ENCODE measurements at regions of chr22 and their contacts with region 1.

Region 1: DNA sequence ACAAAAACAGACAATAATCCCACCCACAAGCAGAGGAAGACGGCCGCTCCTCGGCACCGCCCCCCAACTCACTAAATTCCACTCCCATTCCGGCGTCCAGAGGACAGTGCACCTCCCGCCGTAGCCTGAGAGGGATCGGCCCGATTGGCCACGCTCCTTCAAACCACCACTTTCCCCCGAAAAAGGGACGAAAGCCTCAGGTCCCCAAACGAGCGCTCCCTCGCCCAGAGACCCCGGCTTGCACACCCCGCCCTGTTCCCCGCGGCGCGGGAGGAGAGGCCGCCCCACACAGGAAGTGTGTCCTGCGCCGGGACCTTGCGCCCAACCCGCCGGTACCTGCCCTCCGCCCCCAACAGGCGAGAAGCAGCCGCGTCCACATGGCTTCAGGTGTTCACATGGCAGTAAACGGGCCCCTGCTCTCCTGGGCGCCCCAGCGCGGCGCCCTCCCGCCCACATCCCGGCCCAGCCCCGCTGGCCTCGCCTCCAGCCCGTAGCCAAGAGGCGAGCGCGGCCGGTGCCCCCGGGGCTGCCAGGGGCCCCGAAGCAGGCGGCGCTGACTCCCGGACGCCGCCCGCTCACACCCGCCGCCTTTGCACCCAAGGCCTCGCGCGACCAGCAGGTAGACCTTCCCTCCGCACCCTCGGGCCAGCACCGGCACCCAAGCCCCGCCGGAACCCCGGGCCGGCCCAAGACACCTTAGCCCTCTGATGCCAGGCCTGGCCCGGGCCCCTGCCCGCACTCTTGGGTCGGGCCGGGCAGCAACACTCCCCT is 861 bp downstream of the TCF20 start:
- DNase-seq: peak; percentile 93
- H3K4me3 Mint-ChIP-seq: peak overlapping the region; percentile 97
- H3K27ac Mint-ChIP-seq: peak overlapping the region; percentile 81
- H3K4me1 Mint-ChIP-seq: peaks cover 30% of the 10 kb centered on the region
- H3K27me3 Mint-ChIP-seq: no peaks in the 10 kb centered on the region

Region 2: DNA sequence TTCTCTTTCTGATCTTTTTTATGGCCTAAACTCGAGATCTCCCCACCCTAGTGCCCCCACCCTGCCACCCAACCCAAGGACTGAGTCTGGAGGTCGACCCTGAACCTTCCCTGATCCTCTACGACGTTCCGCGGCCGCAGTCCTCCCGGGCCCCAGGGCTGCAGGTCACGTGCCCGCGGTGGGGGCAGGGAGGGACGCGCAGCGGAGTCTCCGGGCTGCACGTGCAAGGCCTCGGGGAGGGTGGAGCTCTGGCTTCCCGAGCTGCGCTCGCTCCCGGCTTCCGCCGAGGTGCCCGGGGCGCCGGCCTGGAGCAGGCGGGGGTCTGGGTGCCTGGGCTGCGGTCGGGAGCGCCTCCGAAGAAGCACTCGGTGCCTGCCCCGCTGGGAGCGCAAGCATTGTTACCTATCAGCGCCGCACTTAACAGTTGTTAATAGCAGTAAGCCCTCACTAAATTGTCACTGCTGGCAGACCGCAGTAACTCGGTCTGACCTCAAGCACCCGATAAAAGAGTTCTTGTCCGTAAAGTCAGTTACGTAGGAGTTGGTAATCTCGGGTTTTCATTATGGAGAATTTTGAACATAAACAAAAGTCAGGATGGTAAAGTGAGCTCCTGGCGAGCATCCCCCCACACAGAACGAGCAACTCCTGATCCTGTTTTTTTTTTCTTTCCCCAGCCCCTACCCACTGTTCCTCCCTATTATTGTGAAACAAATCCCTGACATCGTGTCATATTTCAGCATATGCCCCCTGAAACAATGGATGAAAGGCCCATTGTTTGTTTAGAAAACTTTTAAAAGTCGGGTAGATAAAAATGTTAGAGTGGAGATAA is 1246.9 kb before region 1 on chr22:
- intact Hi-C with region 1: no loop called
- DNase-seq: peak; percentile 93
- H3K4me3 Mint-ChIP-seq: peak overlapping the region; percentile 86
- H3K27ac Mint-ChIP-seq: peak overlapping the region; percentile 88
- H3K4me1 Mint-ChIP-seq: peaks cover 20% of the 10 kb centered on the region
- H3K27me3 Mint-ChIP-seq: peaks cover 10% of the 10 kb centered on the region

Region 3: GRCh38 chr22:42079319-42080251 is 190.0 kb before region 1 on chr22 and contains the start of gene SMDT1:
- intact Hi-C with region 1: no loop called
- DNase-seq: peak; percentile 99
- H3K4me3 Mint-ChIP-seq: peak within 1 kb of the TSS; percentile 92
- H3K27ac Mint-ChIP-seq: peak within 1 kb of the TSS; percentile 93
- H3K4me1 Mint-ChIP-seq: peaks cover 28% of the 10 kb centered on the region
- H3K27me3 Mint-ChIP-seq: no peaks in the 10 kb centered on the region
- total RNA-seq, gene SMDT1: 54.4 and 58.7 TPM in 2 replicates

Region 4: DNA sequence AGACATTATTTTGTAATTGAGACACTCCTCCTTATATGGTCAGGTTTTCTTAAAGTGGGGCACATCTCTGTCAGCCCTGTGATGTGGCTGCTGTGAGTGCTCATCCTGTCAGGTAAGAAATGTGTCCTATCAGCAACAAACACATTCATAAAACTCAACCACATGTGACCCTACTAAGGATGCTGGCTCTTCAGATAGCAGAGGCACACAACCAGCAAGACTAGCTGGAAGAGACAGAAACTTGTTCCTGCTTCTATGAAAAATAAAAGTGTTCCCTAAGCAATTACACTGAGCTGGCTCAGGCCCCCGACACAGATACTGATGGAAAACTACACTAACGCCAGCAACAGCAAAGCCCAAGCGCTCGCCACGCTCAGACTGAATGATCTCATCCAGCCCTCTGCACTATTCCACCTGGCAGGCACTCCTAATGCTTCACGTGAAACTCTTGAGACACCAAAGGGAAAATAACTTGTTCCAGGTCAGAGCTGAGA is 89.2 kb before region 1 on chr22:
- intact Hi-C with region 1: loop called (anchors 10 kb)
- DNase-seq: peak; percentile 82
- H3K4me3 Mint-ChIP-seq: peak overlapping the region; percentile 57
- H3K27ac Mint-ChIP-seq: peak overlapping the region; percentile 82
- H3K4me1 Mint-ChIP-seq: peaks cover 65% of the 10 kb centered on the region
- H3K27me3 Mint-ChIP-seq: no peaks in the 10 kb centered on the region

Region 5: DNA sequence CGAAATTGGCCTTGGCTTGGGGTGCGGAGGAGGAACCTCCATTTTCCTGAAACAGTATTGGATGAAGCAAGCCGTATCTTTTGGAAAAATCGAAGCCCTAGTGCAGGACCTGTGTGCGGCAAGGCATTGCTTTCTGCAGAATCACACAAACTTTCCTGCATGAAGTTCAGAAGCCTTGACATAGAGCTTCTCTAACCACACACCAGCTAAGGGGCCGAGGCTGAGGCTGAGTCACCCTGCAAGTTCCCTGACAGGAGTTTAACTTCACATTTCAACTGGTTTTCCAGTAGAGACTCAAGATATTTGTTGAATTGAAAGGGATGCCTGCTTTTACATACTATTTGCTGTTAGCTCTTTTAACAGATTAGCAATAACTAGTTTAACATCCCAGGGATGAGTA is 66.9 kb before region 1 on chr22:
- intact Hi-C with region 1: loop called (anchors 10 kb)
- DNase-seq: peak; percentile 85
- H3K4me3 Mint-ChIP-seq: peak overlapping the region; percentile 84
- H3K27ac Mint-ChIP-seq: peak overlapping the region; percentile 84
- H3K4me1 Mint-ChIP-seq: peaks cover 39% of the 10 kb centered on the region
- H3K27me3 Mint-ChIP-seq: no peaks in the 10 kb centered on the region

Region 6: GRCh38 chr22:42300259-42301076 is 30.9 kb after region 1 on chr22:
- intact Hi-C with region 1: loop called (anchors 1 kb)
- DNase-seq: peak; percentile 83
- H3K4me3 Mint-ChIP-seq: peak overlapping the region; percentile 76
- H3K27ac Mint-ChIP-seq: peak overlapping the region; percentile 82
- H3K4me1 Mint-ChIP-seq: peaks cover 41% of the 10 kb centered on the region
- H3K27me3 Mint-ChIP-seq: peaks cover 12% of the 10 kb centered on the region

Measured in activated CD4-positive, alpha-beta T cell treated with anti-CD3 and anti-CD28 coated beads, Interleukin-2, amount 10 ng/mL, durations not matched to agents 24 days and 14 days (primary cell).